ENCODE measurements at regions of chr20 and their contacts with region 1.

Region 1: GRCh38 chr20:50790651-50791277 is 4.1 kb upstream of the BCAS4 start:
- DNase-seq: peak; percentile 86
- H3K4me3 ChIP-seq: peak overlapping the region; percentile 45
- H3K27ac ChIP-seq: peak overlapping the region; percentile 69
- H3K4me1 ChIP-seq: peaks cover 28% of the 10 kb centered on the region
- H3K27me3 ChIP-seq: peaks cover 12% of the 10 kb centered on the region
- CTCF ChIP-seq: peak; percentile 78

Region 2: GRCh38 chr20:50516180-50516934 is 274.4 kb before region 1 on chr20:
- intact Hi-C with region 1: no loop called
- DNase-seq: no peak
- H3K4me3 ChIP-seq: no peak overlapping the region
- H3K27ac ChIP-seq: no peak overlapping the region
- H3K4me1 ChIP-seq: peaks cover 100% of the 10 kb centered on the region
- H3K27me3 ChIP-seq: no peaks in the 10 kb centered on the region
- CTCF ChIP-seq: no peak

Region 3: GRCh38 chr20:50913690-50914375 is 123.1 kb after region 1 on chr20:
- intact Hi-C with region 1: loop called (anchors 10 kb)
- DNase-seq: no peak
- H3K4me3 ChIP-seq: no peak overlapping the region
- H3K27ac ChIP-seq: no peak overlapping the region
- H3K4me1 ChIP-seq: peaks cover 83% of the 10 kb centered on the region
- H3K27me3 ChIP-seq: no peaks in the 10 kb centered on the region
- CTCF ChIP-seq: no peak